Right ventricle myocardium inferior (tissue), 1 donor: ENCODE measurements at regions of chr15 and their contacts with region 1.

Region 1: GRCh38 chr15:99442252-99442897 is 123.4 kb upstream of the MEF2A start:
- DNase-seq: peak; percentile 77
- ATAC-seq: peak; percentile 89

Region 2: GRCh38 chr15:99628374-99629001 is 186.1 kb after region 1 on chr15:
- intact Hi-C with region 1: loop called (anchors 5 kb)
- DNase-seq: no peak
- ATAC-seq: no peak